ENCODE measurements at regions of chr4 and their contacts with region 1.

Region 1: DNA sequence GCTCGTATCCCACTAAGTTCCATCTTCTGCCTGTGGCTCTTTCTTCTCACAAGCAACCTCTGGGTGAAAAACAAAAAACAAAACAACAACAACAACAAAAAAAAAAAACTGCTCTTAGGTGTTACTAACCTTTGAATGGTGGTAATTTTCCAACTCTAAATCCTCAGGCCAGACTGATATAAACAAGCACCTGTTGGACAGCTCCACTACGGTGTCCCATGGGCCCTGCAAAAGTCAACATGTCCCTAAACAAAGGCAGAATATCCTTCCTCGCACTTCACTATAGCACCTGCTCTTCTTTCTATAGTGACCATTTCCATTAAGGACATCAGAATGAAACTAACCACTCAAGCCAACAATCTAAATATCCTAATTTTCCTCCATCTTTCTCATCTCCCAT is 54.6 kb upstream of the PARM1 start:
- DNase-seq: no peak
- H3K4me3 ChIP-seq: no peak overlapping the region
- H3K27ac ChIP-seq: no peak overlapping the region
- H3K4me1 ChIP-seq: no peaks in the 10 kb centered on the region
- H3K27me3 ChIP-seq: no peaks in the 10 kb centered on the region
- CTCF ChIP-seq: no peak
- POLR2A ChIP-seq: no peak

Region 2: DNA sequence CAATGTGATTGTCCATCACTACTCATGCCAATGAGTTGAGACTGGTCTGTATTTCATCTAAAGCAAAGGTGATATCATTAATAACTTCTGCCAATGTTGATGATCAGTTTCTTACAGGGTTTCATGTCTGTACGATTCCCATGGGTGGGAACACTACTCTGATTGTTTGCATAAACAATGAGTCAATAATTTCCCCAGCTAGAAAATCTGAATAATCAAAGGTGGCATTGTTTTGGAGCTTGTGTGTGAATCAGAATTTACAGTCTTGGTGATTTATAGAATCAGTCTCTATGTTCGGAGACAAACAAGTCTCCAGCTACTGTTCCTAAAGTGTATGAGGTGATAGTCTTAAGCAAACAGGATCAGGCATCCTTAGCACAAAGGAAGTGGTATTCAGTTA is 19.1 kb after region 1 on chr4:
- intact Hi-C with region 1: loop called (anchors 1 kb)
- DNase-seq: no peak
- H3K4me3 ChIP-seq: no peak overlapping the region
- H3K27ac ChIP-seq: no peak overlapping the region
- H3K4me1 ChIP-seq: no peaks in the 10 kb centered on the region
- H3K27me3 ChIP-seq: no peaks in the 10 kb centered on the region
- CTCF ChIP-seq: no peak
- POLR2A ChIP-seq: no peak

Measured in breast epithelium (tissue), 4 donors.